Right cardiac atrium (tissue), 5 donors: ENCODE measurements at regions of chr20 and their contacts with region 1.

Region 1: DNA sequence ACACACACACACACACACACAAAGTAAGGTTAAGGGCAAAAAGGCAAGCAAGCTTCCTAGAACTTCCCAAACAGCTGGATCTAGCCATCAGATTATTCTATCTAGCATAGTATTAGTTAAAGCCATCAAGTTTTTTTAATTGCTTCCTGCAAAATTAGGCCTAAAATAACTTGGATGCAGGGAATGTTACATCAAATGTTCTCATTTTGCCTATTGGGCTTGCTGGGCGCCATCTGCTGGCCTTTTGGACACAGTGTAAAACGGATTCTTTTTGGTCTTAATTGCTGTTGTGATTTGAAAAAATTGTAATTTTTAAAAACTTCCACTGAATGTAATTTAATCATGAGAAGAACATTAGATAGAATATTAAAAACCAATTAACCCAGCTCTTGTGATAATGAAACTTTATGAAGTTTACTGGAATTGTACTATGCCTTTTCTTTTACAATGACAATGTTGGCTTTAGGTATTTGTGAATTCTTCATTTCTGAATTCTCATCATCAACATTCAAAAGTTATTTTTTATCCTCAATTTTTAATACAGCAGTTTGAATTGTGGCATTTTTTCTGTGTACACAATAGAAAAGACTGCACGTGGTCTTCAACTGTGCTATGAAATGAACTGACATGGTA is 6.8 kb downstream of the MKKS start:
- DNase-seq: peak; percentile 56 to 86 (median 75)
- ATAC-seq: peak in 1 of 2 donors; percentile 63
- H3K4me3 ChIP-seq: no peak overlapping the region
- H3K27ac ChIP-seq: no peak overlapping the region
- H3K4me1 ChIP-seq: peaks cover 7% of the 10 kb centered on the region
- H3K27me3 ChIP-seq: no peaks in the 10 kb centered on the region

Region 2: DNA sequence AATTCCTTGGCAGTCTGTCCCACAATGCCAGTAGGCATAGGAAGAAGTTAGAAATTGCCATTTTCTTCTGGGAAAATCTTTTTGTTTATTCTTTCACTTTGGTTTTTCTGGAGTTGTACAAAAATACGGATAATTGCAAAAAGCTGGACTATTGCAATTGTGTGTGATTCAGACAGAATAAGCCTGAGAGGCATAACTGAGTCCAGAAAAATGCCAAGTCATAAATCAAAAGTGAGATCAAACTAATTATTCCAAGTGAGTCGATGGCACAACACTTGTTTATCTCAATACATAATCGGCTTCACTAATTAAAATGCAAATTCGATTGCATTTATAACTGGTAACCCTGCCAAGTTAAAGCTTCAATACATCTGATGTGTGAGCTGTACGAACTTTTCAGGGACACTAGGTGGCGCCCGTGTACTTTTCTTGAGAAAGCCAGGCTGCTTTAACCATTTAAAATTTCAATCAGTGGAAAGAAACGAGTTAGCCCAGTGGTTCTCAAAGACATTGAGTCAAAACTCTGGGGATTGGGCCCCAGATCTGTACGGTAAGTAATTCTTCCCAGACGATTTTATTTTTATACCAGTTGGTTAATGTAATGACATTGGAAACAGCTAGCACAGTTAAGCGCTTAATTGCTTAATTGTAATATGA is 810.2 kb before region 1 on chr20:
- intact Hi-C with region 1: loop called in 2 of 4 experiments (anchors 10 kb)
- DNase-seq: peak; percentile 48 to 71 (median 66)
- ATAC-seq: peak; percentile 72 to 75
- H3K4me3 ChIP-seq: no peak overlapping the region
- H3K27ac ChIP-seq: no peak overlapping the region
- H3K4me1 ChIP-seq: no peaks in the 10 kb centered on the region
- H3K27me3 ChIP-seq: no peaks in the 10 kb centered on the region

Region 3: GRCh38 chr20:9912858-9913434 is 514.2 kb before region 1 on chr20:
- intact Hi-C with region 1: no loop called
- DNase-seq: peak; percentile 15 to 61 (median 52)
- ATAC-seq: no peak
- H3K4me3 ChIP-seq: no peak overlapping the region
- H3K27ac ChIP-seq: no peak overlapping the region
- H3K4me1 ChIP-seq: no peaks in the 10 kb centered on the region
- H3K27me3 ChIP-seq: no peaks in the 10 kb centered on the region

Region 4: GRCh38 chr20:9978397-9979004 is 448.7 kb before region 1 on chr20:
- intact Hi-C with region 1: loop called (anchors 5 to 10 kb)
- DNase-seq: peak in 1 of 3 donors; percentile 7
- ATAC-seq: peak; percentile 90 to 93
- H3K4me3 ChIP-seq: no peak overlapping the region
- H3K27ac ChIP-seq: no peak overlapping the region
- H3K4me1 ChIP-seq: no peaks in the 10 kb centered on the region
- H3K27me3 ChIP-seq: no peaks in the 10 kb centered on the region